Aorta (tissue), 5 donors: ENCODE measurements at regions of chr18 and their contacts with region 1.

Region 1: DNA sequence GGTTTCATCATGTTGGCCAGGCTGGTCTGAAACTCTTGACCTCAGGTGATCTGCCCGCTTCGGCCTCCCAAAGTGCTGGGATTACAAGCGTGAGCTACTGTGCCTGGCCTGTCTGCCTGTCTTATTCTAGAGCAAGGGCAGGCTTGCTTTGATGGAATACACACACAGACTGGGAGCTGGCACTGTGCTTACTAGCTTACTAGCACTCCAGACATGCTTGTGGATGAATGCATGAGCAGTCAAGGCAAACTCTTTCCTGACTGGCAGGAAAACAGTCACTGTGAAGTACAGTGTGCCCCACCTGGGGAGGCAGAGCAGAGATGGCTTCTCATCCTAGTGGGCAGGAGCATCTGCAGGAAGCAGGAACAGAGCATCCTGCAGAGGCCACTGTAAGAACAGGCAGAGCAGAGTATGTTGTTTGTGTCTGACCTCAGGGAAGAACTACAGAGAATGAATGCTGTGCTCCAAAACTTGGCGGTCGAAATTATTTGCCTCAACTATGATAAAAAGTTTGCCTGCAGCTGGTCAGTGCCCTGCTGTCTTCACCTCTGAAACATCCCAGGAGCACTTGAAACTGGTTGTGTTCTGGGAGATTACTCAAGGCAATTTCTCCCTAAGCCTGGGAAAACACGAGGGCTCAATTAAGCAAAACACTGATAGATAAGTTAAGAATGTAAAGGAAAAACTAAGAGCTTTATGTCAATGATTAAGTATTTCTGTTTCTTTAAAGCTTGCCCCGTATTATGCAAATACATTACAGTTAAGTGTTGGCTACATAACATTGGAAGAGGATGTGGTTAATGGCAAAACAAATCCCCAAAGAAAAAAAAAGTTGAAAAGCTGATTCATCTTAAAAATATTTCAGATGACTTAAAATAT is 102.4 kb downstream of the VAPA start:
- DNase-seq: no peak
- ATAC-seq: peak; percentile 65
- H3K4me3 ChIP-seq: no peak overlapping the region
- H3K27ac ChIP-seq: peak overlapping the region in 1 of 2 donors; percentile 39
- H3K4me1 ChIP-seq: peaks cover 3 to 6% of the 10 kb centered on the region in 2 donors
- H3K27me3 ChIP-seq: no peaks in the 10 kb centered on the region

Region 2: DNA sequence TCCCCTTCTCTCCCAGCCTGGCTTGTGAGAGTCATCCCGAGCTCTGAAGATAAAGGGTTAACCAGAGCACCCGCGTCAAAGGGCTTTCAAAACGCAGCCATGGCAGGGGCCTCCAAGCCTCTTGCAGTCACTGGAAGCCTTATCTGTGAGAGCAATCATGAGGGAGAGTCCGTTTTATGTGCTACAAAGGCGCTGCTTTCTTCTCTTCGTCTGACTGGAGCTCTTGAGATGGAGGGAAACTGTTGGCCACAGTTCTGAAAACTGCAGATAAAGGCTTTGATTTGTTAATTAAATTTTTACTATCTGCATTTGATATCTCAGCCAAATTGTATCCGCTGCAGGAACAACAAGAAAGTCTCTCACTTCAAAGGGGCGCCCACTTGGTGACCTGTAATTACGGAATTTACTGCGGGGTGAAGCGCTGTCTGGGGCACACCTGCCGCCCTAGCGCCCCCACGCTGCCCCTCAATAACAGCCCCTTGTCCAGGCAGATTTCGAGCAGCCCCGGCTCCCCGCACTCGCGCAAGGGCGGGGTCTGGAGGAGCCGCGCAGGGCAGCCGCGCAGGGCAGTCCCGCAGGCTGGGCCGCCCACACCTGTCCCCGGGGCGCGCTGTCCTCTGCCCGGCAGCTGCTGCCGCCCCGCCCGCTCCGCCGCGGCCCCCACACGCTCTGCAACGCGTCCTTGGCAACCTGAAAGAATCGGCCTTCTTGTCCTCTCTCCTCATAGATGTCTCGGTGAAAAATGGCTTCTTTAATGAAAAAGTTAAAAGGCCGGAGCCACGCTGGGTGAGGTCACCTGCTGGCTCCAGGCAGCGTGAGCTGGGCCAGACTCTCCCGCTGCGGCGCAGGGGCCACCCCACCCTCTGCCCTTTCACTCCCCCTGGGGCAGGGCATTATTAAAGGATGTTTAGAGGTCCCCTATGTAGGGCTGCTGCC is 115.5 kb after region 1 on chr18:
- intact Hi-C with region 1: loop called in 1 of 2 experiments (anchors 10 kb)
- DNase-seq: no peak
- ATAC-seq: peak; percentile 56
- H3K4me3 ChIP-seq: peak overlapping the region in 1 of 2 donors; percentile 19
- H3K27ac ChIP-seq: no peak overlapping the region
- H3K4me1 ChIP-seq: no peaks in the 10 kb centered on the region
- H3K27me3 ChIP-seq: no peaks in the 10 kb centered on the region